K562 (cell line): ENCODE measurements at regions of chr14 and their contacts with region 1.

Region 1: DNA sequence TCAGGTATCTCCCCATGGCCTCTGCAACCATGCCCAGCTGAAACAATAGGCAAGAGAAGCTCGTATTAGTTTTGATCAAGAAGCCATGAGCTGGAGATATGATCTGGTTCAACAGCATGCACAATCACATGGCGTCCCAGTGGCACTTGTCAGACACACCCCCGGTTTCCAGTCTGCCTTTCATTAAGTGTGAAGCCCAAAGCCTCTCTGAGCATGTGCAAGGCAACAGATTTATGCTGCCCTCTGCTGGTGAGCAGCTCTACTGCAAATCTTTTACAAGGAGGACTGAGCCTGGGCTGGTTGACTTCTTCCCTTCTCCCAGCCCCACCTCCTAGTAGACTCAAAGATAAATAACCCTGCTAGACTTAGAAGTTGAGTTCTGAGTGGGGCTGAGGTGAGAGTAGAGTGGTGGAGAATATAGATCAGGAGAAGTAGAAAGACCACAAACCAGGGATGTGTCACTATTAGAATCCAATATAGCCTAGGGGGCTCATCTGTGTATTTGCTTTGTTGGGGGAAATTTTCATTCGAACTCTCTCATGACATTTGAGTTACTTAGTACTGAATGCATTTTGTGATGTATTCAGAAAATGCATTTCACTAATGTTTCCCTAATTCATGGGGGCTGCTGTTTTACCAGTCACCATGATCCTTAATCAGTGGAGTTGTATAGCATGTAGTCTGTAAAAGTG is 53.7 kb upstream of the MBIP start:
- DNase-seq: peak; percentile 68 to 85 (median 70)
- ATAC-seq: peak; percentile 98
- H3K4me3 ChIP-seq: no peak overlapping the region
- H3K27ac ChIP-seq: no peak overlapping the region
- H3K4me1 ChIP-seq: no peaks in the 10 kb centered on the region; a peak in 1 of 5 replicates
- H3K27me3 ChIP-seq: no peaks in the 10 kb centered on the region
- CTCF ChIP-seq: peak; percentile 74 to 86 (median 80)
- EP300 ChIP-seq: no peak
- POLR2A ChIP-seq: no peak
- RAD21 ChIP-seq: peak; percentile 62 to 88

Region 2: GRCh38 chr14:36151335-36151734 is 222.8 kb before region 1 on chr14:
- CTCF ChIA-PET with region 1: no interaction called
- POLR2A ChIA-PET with region 1: no interaction called
- in situ Hi-C with region 1: no loop called
- intact Hi-C with region 1: no loop called
- DNase-seq: no peak
- ATAC-seq: no peak
- H3K4me3 ChIP-seq: no peak overlapping the region
- H3K27ac ChIP-seq: no peak overlapping the region
- H3K4me1 ChIP-seq: no peaks in the 10 kb centered on the region
- H3K27me3 ChIP-seq: no peaks in the 10 kb centered on the region
- CTCF ChIP-seq: no peak
- EP300 ChIP-seq: no peak
- POLR2A ChIP-seq: no peak
- RAD21 ChIP-seq: no peak

Region 3: DNA sequence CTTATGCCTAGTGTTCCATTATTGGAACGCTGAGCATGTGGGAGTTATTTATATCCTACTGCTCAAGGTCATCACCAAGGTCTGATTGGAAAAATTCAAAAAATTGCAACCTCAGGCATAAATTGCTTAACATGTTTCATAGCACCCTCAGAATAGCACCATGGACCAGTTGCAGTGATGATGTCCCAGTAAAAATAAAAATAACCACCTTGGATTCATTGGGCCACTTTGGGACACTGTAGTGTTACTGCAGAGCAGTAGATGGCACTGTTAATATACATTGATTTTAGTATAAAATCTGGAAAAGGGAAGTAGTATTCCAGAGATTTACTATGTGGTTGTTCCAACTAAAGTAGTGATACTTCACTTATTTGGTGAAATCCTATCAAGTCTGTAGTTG is 166.6 kb before region 1 on chr14:
- CTCF ChIA-PET with region 1: interaction called, 5 read pairs
- POLR2A ChIA-PET with region 1: no interaction called
- in situ Hi-C with region 1: no loop called
- intact Hi-C with region 1: loop called (anchors 10 kb)
- DNase-seq: peak in 1 of 4 experiments; percentile 6
- ATAC-seq: peak; percentile 46; the same call in 1 of the 3 replicates
- H3K4me3 ChIP-seq: no peak overlapping the region
- H3K27ac ChIP-seq: no peak overlapping the region
- H3K4me1 ChIP-seq: no peaks in the 10 kb centered on the region
- H3K27me3 ChIP-seq: no peaks in the 10 kb centered on the region
- CTCF ChIP-seq: peak; percentile 19 to 52 (median 22); a peak in 3 of 6 replicates
- EP300 ChIP-seq: no peak
- POLR2A ChIP-seq: no peak
- RAD21 ChIP-seq: peak; percentile 27 to 60; a peak in 3 of 4 replicates

Region 4: GRCh38 chr14:36241183-36241582 is 132.9 kb before region 1 on chr14:
- CTCF ChIA-PET with region 1: interaction called, 5 read pairs
- POLR2A ChIA-PET with region 1: no interaction called
- in situ Hi-C with region 1: no loop called
- intact Hi-C with region 1: loop called (anchors 1 kb)
- DNase-seq: peak in 1 of 4 experiments; percentile 17
- ATAC-seq: peak; percentile 68; the same call in 2 of the 3 replicates
- H3K4me3 ChIP-seq: no peak overlapping the region
- H3K27ac ChIP-seq: no peak overlapping the region
- H3K4me1 ChIP-seq: no peaks in the 10 kb centered on the region
- H3K27me3 ChIP-seq: no peaks in the 10 kb centered on the region
- CTCF ChIP-seq: peak; percentile 1 to 55 (median 18); a peak in 2 of 6 replicates
- EP300 ChIP-seq: no peak
- POLR2A ChIP-seq: no peak
- RAD21 ChIP-seq: peak; percentile 36 to 78

Region 5: GRCh38 chr14:36390718-36391117 is 16.6 kb after region 1 on chr14:
- CTCF ChIA-PET with region 1: no interaction called
- POLR2A ChIA-PET with region 1: no interaction called
- in situ Hi-C with region 1: no loop called
- intact Hi-C with region 1: no loop called
- DNase-seq: no peak
- ATAC-seq: no peak
- H3K4me3 ChIP-seq: no peak overlapping the region
- H3K27ac ChIP-seq: no peak overlapping the region
- H3K4me1 ChIP-seq: no peaks in the 10 kb centered on the region
- H3K27me3 ChIP-seq: no peaks in the 10 kb centered on the region; a peak in 1 of 5 replicates
- CTCF ChIP-seq: no peak
- EP300 ChIP-seq: no peak
- POLR2A ChIP-seq: no peak
- RAD21 ChIP-seq: no peak

Region 6: GRCh38 chr14:36505181-36505815 is 131.2 kb after region 1 on chr14:
- CTCF ChIA-PET with region 1: no interaction called
- POLR2A ChIA-PET with region 1: no interaction called
- in situ Hi-C with region 1: no loop called
- intact Hi-C with region 1: no loop called
- DNase-seq: no peak
- ATAC-seq: no peak
- H3K4me3 ChIP-seq: no peak overlapping the region
- H3K27ac ChIP-seq: no peak overlapping the region
- H3K4me1 ChIP-seq: no peaks in the 10 kb centered on the region; a peak in 2 of 5 replicates
- H3K27me3 ChIP-seq: peaks cover 28 to 47% of the 10 kb centered on the region in 2 experiments
- CTCF ChIP-seq: no peak
- EP300 ChIP-seq: no peak
- POLR2A ChIP-seq: no peak
- RAD21 ChIP-seq: no peak